Caco-2 (cell line): ENCODE measurements at regions of chr16 and their contacts with region 1.

Region 1: GRCh38 chr16:69286941-69287713 is 24.0 kb upstream of the VPS4A start:
- DNase-seq: peak in 1 of 2 experiments; percentile 70
- H3K4me3 ChIP-seq: no peak overlapping the region
- H3K4me3 Mint-ChIP-seq: no peak overlapping the region
- H3K27ac Mint-ChIP-seq: no peak overlapping the region
- H3K4me1 ChIP-seq: peaks cover 29% of the 10 kb centered on the region
- H3K4me1 Mint-ChIP-seq: peaks cover 6% of the 10 kb centered on the region
- H3K27me3 ChIP-seq: no peaks in the 10 kb centered on the region
- H3K27me3 Mint-ChIP-seq: no peaks in the 10 kb centered on the region
- CTCF ChIP-seq: peak; percentile 68 to 73

Region 2: GRCh38 chr16:69131839-69132423 is 155.2 kb before region 1 on chr16:
- CTCF ChIA-PET with region 1: no interaction called
- POLR2A ChIA-PET with region 1: interaction called, 10 read pairs
- intact Hi-C with region 1: no loop called
- DNase-seq: peak; percentile 93 to 95
- H3K4me3 ChIP-seq: peak overlapping the region; percentile 54
- H3K4me3 Mint-ChIP-seq: peak overlapping the region; percentile 96
- H3K27ac Mint-ChIP-seq: peak overlapping the region; percentile 92
- H3K4me1 ChIP-seq: peaks cover 14% of the 10 kb centered on the region; the same call in 1 of the 2 replicates
- H3K4me1 Mint-ChIP-seq: peaks cover 5% of the 10 kb centered on the region
- H3K27me3 ChIP-seq: no peaks in the 10 kb centered on the region
- H3K27me3 Mint-ChIP-seq: no peaks in the 10 kb centered on the region
- CTCF ChIP-seq: no peak

Region 3: DNA sequence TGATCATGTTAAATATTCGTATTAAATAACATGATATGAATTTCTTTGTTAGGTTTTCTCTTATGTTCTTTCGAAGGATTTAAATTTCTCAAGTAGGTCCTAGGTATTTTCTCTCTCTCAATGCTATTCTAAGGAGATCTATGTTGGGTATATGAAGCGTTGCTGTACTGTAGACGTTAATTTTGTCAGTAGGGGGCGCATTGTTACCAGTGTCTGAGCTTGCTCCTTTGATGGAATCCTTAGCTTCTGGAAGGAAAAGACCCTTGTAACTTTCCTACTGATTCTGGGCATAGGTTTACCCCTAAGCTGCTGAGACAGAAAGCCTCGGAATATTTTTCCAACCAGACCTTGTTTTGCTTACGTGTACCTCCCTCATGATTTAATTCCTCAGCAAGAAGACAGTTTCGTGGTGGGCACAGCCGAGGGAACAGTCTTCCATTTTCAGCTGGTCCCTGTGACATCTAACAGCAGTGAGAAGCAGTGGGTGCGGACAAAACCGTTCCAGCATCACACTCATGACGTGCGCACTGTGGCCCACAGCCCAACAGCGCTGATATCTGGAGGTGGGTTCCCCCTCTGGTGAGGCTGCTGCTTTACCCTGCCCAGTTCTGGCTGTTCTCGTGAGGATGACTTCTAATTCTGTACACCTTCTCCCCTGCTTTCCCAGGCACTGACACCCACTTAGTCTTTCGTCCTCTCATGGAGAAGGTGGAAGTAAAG is 136.8 kb before region 1 on chr16:
- CTCF ChIA-PET with region 1: interaction called, 13 read pairs
- POLR2A ChIA-PET with region 1: no interaction called
- intact Hi-C with region 1: loop called (anchors 1 kb)
- DNase-seq: peak; percentile 63 to 81
- H3K4me3 ChIP-seq: no peak overlapping the region
- H3K4me3 Mint-ChIP-seq: no peak overlapping the region
- H3K27ac Mint-ChIP-seq: no peak overlapping the region
- H3K4me1 ChIP-seq: no peaks in the 10 kb centered on the region
- H3K4me1 Mint-ChIP-seq: no peaks in the 10 kb centered on the region
- H3K27me3 ChIP-seq: no peaks in the 10 kb centered on the region
- H3K27me3 Mint-ChIP-seq: no peaks in the 10 kb centered on the region
- CTCF ChIP-seq: peak; percentile 71 to 77

Region 4: DNA sequence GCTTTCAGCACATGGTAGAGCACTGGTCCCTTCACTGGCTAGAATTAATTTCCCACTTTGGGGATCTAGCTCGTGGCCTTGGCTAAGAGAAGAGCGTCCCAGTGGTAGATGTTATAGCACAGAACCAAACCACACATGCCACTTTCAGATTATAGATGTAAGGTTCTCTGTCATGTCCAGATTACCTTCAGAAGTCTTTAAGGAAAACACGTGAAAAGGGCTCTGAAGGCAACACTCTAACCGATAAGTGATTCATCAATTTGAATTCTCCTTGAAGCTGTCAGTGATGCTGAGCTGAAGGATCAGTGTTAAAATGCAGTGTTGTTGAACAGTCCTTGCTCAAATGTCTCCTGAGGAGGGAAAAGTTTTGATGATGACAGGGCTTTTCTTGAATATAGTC is 19.5 kb before region 1 on chr16:
- CTCF ChIA-PET with region 1: no interaction called
- POLR2A ChIA-PET with region 1: interaction called, 3 read pairs
- intact Hi-C with region 1: loop called (anchors 2 kb)
- DNase-seq: no peak
- H3K4me3 ChIP-seq: no peak overlapping the region
- H3K4me3 Mint-ChIP-seq: no peak overlapping the region
- H3K27ac Mint-ChIP-seq: no peak overlapping the region
- H3K4me1 ChIP-seq: no peaks in the 10 kb centered on the region
- H3K4me1 Mint-ChIP-seq: no peaks in the 10 kb centered on the region
- H3K27me3 ChIP-seq: no peaks in the 10 kb centered on the region; the same call in 1 of the 2 replicates
- H3K27me3 Mint-ChIP-seq: no peaks in the 10 kb centered on the region
- CTCF ChIP-seq: no peak